Cardiac septum (tissue), 1 donor: ENCODE measurements at regions of chr9 and their contacts with region 1.

Region 1: GRCh38 chr9:70553707-70554673 is 139.5 kb upstream of the KLF9 start:
- DNase-seq: no peak

Region 2: GRCh38 chr9:70466976-70467561 is 86.9 kb before region 1 on chr9:
- intact Hi-C with region 1: no loop called
- DNase-seq: no peak

Region 3: DNA sequence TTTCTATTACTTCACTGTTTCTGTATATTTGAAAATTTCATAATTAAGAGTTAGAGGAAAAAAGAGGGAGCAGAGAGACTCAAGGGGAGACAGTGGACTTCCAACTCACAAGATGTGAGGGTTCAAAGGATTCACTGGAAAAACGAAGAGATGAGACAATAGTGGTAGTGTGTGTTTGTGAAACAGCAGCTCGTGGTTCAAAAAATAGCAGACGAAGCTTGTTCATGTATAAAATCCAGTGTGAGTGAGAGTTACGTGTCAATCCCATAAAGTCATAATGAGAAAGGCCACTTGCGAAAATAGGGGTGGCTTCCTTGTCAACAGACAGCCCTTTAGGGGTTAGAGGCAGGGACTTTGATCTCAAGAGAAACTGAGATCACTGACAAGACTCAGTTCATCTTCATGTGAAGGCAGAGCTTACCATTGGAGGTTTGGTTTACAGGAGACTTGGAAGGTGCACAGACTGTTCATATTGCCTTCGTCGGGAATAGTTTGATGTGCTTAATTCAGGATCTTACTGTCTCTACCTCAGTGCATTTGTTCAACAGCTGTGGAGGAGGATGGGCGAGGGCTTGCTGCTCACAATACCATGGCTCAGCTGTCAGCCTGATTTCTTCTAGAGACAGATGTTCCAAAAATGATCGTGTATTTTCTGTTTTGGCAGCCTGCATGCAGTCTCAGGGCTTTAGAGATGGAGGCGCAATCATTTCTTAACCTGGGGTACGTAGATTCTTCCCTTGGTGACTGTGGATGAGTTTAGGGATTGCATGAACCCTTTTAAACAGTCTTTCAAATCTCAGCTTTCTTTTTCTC is 33.9 kb before region 1 on chr9:
- intact Hi-C with region 1: loop called (anchors 5 kb)
- DNase-seq: no peak